Right ventricle myocardium inferior (tissue), 1 donor: ENCODE measurements at regions of chr2 and their contacts with region 1.

Region 1: DNA sequence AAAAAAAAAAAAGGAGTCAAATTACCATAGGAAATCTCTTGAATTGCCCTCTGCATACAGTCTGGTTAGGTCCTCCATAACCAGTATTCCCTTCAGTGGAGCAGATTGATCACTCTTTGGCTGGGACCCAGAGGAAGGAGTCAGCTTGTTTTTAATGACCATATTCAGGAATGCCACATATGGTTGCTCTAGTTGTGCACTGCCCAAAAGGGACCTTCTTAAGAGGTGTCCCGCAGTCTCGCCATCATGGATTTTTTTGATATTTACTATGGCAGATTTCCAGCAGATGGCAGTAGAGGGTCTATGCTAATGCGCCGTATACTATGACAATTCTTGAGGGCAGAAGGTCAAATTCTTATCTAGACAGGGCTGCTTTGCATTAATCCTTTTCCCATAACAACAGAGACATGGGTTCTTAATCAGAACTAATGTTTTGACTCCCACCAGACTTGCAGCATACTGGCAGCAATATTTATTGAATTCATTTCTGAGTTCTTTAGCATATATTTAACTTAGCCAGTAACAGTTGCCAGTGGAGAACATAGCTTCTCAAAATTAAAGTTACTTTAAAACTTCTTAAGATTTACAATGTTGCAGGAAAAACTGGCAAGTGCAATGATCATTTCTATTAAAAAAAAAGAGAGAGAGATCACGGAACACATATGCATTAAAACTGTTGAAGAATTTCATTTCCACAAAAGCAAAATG is 31.8 kb upstream of the INPP4A start:
- DNase-seq: no peak
- ATAC-seq: peak; percentile 75

Region 2: DNA sequence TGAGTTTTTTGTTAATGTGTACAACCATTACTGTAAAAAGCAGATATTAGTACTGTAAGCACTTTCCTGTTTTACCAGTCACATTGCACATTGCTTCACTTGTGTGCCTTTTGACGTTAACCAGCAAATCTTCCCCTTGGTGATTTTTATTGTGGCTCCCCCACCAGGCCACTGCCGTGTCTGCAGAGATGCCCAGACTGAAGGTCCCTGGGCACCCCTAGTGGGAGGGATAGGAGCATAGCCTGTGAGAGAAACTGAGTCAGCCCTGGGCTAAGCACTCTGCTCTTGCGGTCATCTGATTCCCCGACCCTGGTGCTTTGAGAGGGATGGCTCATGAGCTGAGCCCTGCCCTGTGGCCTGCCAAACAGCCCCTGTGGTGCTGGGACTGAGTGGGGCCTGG is 105.2 kb after region 1 on chr2:
- intact Hi-C with region 1: loop called (anchors 5 kb)
- DNase-seq: no peak
- ATAC-seq: peak; percentile 35

Region 3: GRCh38 chr2:98577313-98577712 is 164.4 kb after region 1 on chr2:
- intact Hi-C with region 1: loop called (anchors 5 kb)
- DNase-seq: no peak
- ATAC-seq: peak; percentile 33

Region 4: GRCh38 chr2:98601532-98602132 is 188.7 kb after region 1 on chr2:
- intact Hi-C with region 1: loop called (anchors 1 kb)
- DNase-seq: no peak
- ATAC-seq: peak; percentile 59

Region 5: DNA sequence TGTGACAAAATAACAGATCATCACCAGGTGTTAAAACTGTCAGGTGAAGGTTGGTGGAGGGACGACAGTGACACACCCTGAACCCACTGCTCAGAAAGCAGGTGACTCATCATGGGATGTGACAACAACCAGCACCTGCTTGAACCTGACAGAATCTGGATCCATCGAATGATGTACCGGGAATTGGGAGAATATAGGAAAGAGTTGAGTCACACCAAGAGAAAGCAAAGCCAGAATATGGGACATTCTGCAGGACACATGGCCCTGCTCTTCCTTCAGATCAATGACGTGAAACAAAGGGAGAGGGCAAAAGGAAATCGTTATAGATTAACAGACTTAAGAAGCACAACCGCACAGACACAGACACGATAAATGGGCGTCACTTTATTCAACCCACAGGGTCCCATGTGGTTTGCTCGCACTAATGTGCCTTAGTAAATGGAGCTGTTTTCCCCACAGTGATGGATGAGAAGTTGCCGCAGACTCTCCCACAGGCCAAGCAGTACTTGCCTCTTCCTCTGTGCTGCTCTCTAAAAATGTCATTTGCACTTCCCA is 423.0 kb after region 1 on chr2:
- intact Hi-C with region 1: loop called (anchors 5 kb)
- DNase-seq: no peak
- ATAC-seq: no peak